Left cardiac atrium (tissue), 4 donors: ENCODE measurements at regions of chr7 and their contacts with region 1.

Region 1: DNA sequence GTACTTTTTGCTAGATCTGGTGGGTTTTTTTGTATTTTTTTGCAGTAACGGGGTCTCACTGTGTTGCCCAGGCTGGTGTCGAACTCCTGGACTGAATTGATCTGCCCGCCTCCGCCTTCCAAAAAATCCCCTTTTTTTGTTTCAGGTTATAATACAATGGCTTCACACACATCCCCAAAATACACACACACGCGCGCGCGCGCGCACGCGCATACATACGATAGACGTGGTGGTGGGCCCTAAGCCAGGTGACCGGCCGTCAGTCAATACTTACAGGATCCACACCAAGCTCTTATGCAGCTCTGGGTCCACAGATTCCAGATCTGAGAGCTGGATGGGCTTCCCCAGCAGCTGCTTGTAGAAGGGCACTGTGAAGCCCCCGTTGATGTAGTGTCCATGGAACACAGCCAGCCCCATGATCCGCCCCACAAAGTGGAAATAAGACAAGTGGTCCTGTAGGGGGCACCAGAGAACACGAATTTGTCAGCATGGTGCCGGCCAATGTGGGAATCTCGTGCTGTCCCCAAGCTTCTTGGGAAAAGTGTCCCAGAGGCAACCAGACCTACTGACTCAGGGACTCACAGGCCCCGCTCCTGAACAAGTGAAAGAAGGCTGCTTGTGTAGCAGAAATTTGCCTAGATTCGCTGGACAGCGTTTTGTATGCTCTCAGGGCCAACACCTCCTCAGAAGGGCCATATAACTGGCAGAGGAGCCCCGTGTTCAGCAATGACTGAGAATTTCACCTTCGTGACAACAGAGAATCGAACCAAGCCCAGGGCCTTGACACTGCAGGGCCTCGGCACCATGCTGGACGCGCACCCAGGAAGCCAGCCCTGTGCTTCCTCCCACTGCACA is 103.6 kb downstream of the SMURF1 start:
- DNase-seq: peak; percentile 85
- ATAC-seq: peak; percentile 66 to 84

Region 2: DNA sequence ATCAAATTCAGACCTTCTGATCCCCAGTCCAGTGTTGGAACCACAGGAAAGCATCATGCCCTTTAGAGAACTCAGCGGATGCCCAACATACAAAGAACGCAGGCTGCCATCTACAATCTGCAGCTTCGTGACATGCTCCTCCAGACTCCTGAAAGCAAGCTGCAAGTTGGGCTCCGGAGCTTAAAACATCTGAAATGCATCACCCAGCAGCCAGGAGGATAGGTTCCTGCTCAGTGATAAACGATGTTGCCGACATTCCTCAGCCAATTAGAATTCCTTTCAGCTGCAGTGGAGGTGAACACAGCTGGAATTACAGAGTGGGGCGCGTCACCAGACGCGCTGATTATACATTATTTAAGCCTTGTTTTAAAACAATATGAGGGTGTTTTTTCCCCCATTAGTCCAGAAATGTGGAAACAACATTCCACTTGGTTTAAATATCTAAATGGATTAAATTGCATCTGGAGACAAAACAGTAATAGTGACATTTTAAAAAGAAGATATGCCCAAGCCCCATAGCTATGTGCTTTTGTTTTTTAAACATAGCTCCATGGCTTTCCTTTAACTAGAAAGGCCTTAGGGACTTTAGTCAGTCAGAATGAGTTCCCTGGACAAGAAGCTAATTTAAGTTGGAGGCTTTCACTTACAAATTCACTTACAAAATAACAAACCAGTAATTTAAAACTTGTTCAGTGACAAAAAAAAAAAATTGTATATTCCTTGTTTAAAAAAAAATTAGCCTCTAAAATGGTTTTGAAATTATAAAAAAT is 97.3 kb after region 1 on chr7:
- intact Hi-C with region 1: loop called in 1 of 2 experiments (anchors 10 kb)
- DNase-seq: no peak
- ATAC-seq: peak; percentile 17 to 42

Region 3: GRCh38 chr7:99312316-99313203 is 272.2 kb after region 1 on chr7:
- intact Hi-C with region 1: loop called (anchors 1 to 2 kb)
- DNase-seq: peak; percentile 66
- ATAC-seq: peak; percentile 70 to 81